ENCODE measurements at regions of chr16 and their contacts with region 1.

Region 1: GRCh38 chr16:30761928-30762810 is at the starts of genes CFAP119 and RNF40:
- DNase-seq: peak; percentile 98
- H3K4me3 Mint-ChIP-seq: peak within 1 kb of the TSS; percentile 87
- H3K27ac Mint-ChIP-seq: peak within 1 kb of the TSS; percentile 88
- H3K4me1 Mint-ChIP-seq: peaks cover 17% of the 10 kb centered on the region
- H3K27me3 Mint-ChIP-seq: no peaks in the 10 kb centered on the region
- CTCF ChIP-seq: no peak
- total RNA-seq, gene CFAP119: 4.8 and 5.2 TPM in 2 replicates
- total RNA-seq, gene RNF40: 78.0 and 85.0 TPM in 2 replicates

Region 2: GRCh38 chr16:30747799-30748634 is 14.2 kb before region 1 on chr16 and contains the start of gene PHKG2:
- CTCF ChIA-PET with region 1: no interaction called
- POLR2A ChIA-PET with region 1: interaction called, 55 read pairs
- intact Hi-C with region 1: no loop called
- DNase-seq: peak; percentile 99
- H3K4me3 Mint-ChIP-seq: peak within 1 kb of the TSS; percentile 87
- H3K27ac Mint-ChIP-seq: peak within 1 kb of the TSS; percentile 86
- H3K4me1 Mint-ChIP-seq: peaks cover 30% of the 10 kb centered on the region
- H3K27me3 Mint-ChIP-seq: no peaks in the 10 kb centered on the region
- CTCF ChIP-seq: no peak
- total RNA-seq, gene PHKG2: 28.0 and 28.4 TPM in 2 replicates

Region 3: GRCh38 chr16:30775392-30776188 is 13.4 kb after region 1 on chr16:
- CTCF ChIA-PET with region 1: interaction called, 5 read pairs
- POLR2A ChIA-PET with region 1: interaction called, 27 read pairs
- intact Hi-C with region 1: no loop called
- DNase-seq: peak; percentile 87
- H3K4me3 Mint-ChIP-seq: peak overlapping the region; percentile 85
- H3K27ac Mint-ChIP-seq: peak overlapping the region; percentile 82
- H3K4me1 Mint-ChIP-seq: peaks cover 22% of the 10 kb centered on the region
- H3K27me3 Mint-ChIP-seq: no peaks in the 10 kb centered on the region
- CTCF ChIP-seq: no peak

Measured in MCF 10A (cell line).